Naive thymus-derived CD8-positive, alpha-beta T cell (primary cell): ENCODE measurements at regions of chr19 and their contacts with region 1.

Region 1: GRCh38 chr19:12913011-12913561 is 6.0 kb downstream of the SYCE2 start:
- DNase-seq: no peak
- ATAC-seq: no peak
- H3K4me3 Mint-ChIP-seq: peak overlapping the region in 4 of 10 donors; percentile 10 to 82 (median 52)
- H3K27ac Mint-ChIP-seq: peak overlapping the region; percentile 93 to 99 (median 98)
- H3K4me1 Mint-ChIP-seq: peaks cover 13 to 37% (median 17%) of the 10 kb centered on the region in 4 donors
- H3K27me3 Mint-ChIP-seq: no peaks in the 10 kb centered on the region

Region 2: DNA sequence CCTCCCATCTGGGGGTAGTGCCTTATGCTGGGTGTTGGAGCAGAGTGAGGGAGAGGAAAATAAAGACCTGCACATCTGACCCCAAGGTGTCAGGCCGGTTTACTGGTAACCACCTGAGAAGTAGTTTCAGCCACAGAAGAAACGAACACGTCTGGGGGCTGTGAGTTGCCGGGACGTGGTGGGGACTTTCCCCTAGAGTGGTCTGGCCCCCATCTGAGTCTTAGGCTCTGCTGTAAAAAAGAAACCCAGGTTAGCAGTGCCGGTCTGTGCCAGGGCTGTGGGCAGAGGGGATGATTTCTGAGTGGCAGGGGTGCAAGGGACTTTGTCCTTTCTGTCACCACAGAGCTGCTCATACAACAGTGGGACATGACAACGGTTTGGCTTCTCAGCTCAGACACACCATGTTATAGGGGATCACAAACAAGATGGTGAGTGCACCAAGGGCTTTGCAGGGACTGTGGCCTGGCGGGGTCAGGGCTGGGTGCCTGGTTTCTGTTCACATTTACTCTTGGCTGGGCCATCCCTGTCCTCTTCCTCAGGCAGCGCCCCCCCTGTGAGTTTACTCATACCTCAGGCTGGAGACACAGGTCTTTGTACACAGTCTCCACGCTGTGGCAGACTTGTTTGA is 13.1 kb before region 1 on chr19:
- POLR2A ChIA-PET with region 1: interaction called, 27 read pairs
- DNase-seq: no peak
- ATAC-seq: peak in 1 of 2 donors; percentile 23
- H3K4me3 Mint-ChIP-seq: no peak overlapping the region
- H3K27ac Mint-ChIP-seq: peak overlapping the region in 2 of 10 donors; percentile 7 to 73
- H3K4me1 Mint-ChIP-seq: peaks cover 0 to under 1% (median under 1%) of the 10 kb centered on the region in 4 donors
- H3K27me3 Mint-ChIP-seq: no peaks in the 10 kb centered on the region

Region 3: DNA sequence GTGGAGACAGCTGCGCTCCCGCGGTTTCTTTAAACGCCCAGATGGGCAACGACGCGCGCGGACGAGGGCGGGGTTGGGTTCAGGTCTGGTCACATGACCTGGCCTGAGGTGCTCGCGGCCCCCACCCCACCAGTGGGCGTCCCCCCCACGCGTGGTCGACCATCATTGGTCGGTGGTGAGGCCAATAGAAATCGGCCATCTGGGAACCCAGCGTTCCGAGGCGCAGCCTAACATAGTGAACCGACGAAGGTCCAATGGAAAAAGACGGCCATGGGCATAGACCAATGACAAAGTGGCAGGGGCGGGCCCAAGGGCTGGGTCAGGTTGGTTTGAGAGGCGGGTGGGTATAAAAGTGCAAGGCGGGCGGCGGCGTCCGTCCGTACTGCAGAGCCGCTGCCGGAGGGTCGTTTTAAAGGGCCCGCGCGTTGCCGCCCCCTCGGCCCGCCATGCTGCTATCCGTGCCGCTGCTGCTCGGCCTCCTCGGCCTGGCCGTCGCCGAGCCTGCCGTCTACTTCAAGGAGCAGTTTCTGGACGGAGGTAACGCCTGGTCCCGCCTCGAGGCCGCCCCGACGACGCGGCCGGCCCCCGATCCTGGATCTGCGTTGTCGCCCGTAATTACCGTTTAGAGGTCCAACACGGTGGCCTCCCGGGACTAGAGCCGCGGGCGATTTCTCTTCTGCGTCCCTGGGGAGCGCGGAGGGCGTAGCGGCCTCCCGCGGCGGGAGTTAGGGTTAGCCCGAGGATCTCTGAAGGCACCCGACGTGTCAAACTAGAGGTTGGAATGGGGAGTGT is 25.3 kb after region 1 on chr19 and contains the start of gene CALR:
- POLR2A ChIA-PET with region 1: interaction called, 122 read pairs
- DNase-seq: peak; percentile 95 to 100 (median 100)
- ATAC-seq: peak; percentile 88 to 91
- H3K4me3 Mint-ChIP-seq: peak within 1 kb of the TSS; percentile 97 to 100 (median 98)
- H3K27ac Mint-ChIP-seq: peak within 1 kb of the TSS; percentile 94 to 99 (median 96)
- H3K4me1 Mint-ChIP-seq: peaks cover 25 to 70% (median 61%) of the 10 kb centered on the region in 4 donors
- H3K27me3 Mint-ChIP-seq: no peaks in the 10 kb centered on the region
- polyA plus RNA-seq, gene CALR: 135 to 190 (median 165) TPM